Aorta (tissue), 5 donors: ENCODE measurements at regions of chr22 and their contacts with region 1.

Region 1: GRCh38 chr22:44735540-44736488 is 16.6 kb upstream of the ARHGAP8 start:
- DNase-seq: peak; percentile 78 to 92
- ATAC-seq: peak; percentile 65
- H3K4me3 ChIP-seq: no peak overlapping the region
- H3K27ac ChIP-seq: no peak overlapping the region
- H3K4me1 ChIP-seq: no peaks in the 10 kb centered on the region
- H3K27me3 ChIP-seq: no peaks in the 10 kb centered on the region

Region 2: DNA sequence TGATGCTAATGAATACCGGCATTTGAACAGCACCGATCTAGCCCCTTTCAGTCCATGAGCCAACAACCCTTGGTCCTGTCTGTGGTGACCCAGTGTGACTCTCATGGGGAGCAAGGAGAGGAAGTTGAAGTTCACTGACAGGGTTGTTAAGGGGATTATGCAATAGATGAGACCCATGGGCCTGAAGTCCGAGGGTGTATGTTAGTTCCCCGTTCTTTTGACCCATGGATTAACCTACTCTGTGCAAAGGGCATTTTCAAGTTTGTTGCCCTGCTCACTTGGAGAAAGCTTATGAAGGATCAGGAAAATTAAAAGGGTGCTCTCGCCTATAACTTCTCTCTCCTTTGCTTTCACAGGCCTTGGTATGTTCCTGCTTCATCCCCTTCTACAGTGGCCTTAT is 807.3 kb before region 1 on chr22:
- intact Hi-C with region 1: no loop called
- DNase-seq: no peak
- ATAC-seq: no peak
- H3K4me3 ChIP-seq: no peak overlapping the region
- H3K27ac ChIP-seq: no peak overlapping the region
- H3K4me1 ChIP-seq: no peaks in the 10 kb centered on the region
- H3K27me3 ChIP-seq: no peaks in the 10 kb centered on the region

Region 3: GRCh38 chr22:44505796-44506354 is 229.9 kb before region 1 on chr22:
- intact Hi-C with region 1: no loop called
- DNase-seq: no peak
- ATAC-seq: no peak
- H3K4me3 ChIP-seq: no peak overlapping the region
- H3K27ac ChIP-seq: no peak overlapping the region
- H3K4me1 ChIP-seq: no peaks in the 10 kb centered on the region
- H3K27me3 ChIP-seq: no peaks in the 10 kb centered on the region

Region 4: GRCh38 chr22:44697423-44698141 is 38.2 kb before region 1 on chr22:
- intact Hi-C with region 1: loop called (anchors 2 to 5 kb)
- DNase-seq: peak; percentile 81 to 93
- ATAC-seq: peak; percentile 66
- H3K4me3 ChIP-seq: no peak overlapping the region
- H3K27ac ChIP-seq: no peak overlapping the region
- H3K4me1 ChIP-seq: no peaks in the 10 kb centered on the region
- H3K27me3 ChIP-seq: no peaks in the 10 kb centered on the region

Region 5: DNA sequence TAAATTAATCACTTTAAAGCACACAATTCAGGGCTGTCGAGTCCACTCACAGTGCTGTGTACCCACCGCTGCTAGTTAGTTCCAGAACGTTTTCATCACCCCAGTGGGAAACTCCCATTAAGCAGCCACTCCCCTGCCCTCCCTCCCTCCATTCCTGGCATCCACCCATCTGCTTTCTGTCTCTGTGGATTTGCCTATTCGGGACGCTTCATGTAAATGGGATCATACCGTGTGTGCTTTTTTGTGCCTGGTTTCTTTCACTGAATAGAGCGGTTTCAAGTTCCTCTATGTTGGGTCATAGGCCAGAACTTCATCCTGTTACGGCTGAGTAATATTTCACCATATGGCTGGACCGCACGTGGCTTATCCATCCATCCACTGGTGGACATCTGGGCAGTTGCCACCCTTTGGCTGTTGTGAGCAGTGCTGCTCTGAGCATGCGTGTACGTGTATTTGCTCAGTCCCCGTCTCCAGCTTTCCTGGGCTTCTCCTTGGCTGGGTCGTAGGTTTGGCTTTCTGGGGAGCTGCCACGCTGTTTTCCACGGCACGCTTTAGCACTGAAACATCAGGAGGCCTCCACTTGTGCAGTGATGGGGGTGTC is 46.6 kb after region 1 on chr22:
- intact Hi-C with region 1: no loop called
- DNase-seq: no peak
- ATAC-seq: no peak
- H3K4me3 ChIP-seq: no peak overlapping the region
- H3K27ac ChIP-seq: no peak overlapping the region
- H3K4me1 ChIP-seq: no peaks in the 10 kb centered on the region
- H3K27me3 ChIP-seq: no peaks in the 10 kb centered on the region

Region 6: DNA sequence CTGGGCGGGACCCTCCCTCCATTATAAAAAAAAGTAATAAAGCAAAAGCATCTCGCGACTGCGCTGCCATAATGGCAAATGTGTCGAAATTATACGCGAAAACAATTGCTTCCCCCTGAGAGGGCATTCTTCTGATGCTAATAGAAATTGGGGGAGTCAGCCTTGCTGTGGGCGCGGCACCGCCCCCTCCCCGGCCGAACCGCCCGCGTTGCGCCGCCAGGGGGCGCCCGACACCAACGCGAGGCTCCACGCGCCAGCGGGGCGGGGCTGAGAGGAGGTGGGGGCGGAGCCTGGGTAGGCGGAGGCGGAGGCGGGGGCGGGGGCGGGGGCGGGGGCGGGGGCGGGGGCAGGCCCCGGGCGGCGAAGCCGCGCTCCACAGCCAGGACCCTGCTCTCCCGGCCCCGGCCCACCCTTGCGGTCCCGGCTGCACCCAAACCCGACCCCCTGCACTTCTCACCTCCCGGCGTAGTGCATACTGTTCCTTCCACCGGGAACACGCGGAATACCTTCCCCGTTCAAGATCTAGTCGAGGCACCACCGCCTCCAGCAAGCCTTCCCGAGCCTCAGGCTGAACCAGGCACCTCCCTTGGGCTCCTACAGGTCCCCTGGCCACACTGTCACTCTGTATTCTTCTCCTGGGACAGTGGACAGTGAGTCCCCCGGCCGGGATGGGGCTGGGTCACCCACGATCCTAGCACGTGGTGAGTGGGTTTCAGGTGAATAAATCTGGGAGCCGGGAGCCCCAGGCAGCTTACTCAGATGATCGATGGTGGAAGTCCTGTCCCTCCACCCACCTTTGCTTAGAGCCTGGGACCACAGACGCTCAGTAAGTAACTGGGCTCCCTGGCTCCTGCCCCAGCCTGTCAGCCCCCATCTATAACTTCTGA is 533.4 kb after region 1 on chr22:
- intact Hi-C with region 1: no loop called
- DNase-seq: peak; percentile 89 to 96
- ATAC-seq: peak; percentile 94
- H3K4me3 ChIP-seq: peak overlapping the region; percentile 57 to 89
- H3K27ac ChIP-seq: peak overlapping the region in 1 of 2 donors; percentile 39
- H3K4me1 ChIP-seq: no peaks in the 10 kb centered on the region
- H3K27me3 ChIP-seq: no peaks in the 10 kb centered on the region